ENCODE measurements at regions of chr13 and their contacts with region 1.

Region 1: GRCh38 chr13:97855570-97856303 is 97.7 kb upstream of the IPO5 start:
- DNase-seq: peak; percentile 76
- H3K4me3 Mint-ChIP-seq: no peak overlapping the region
- H3K27ac Mint-ChIP-seq: no peak overlapping the region
- H3K4me1 Mint-ChIP-seq: peaks cover 9% of the 10 kb centered on the region
- H3K27me3 Mint-ChIP-seq: no peaks in the 10 kb centered on the region
- CTCF ChIP-seq: peak; percentile 88

Region 2: GRCh38 chr13:96460609-96461008 is 1395.1 kb before region 1 on chr13:
- CTCF ChIA-PET with region 1: no interaction called
- POLR2A ChIA-PET with region 1: no interaction called
- intact Hi-C with region 1: no loop called
- DNase-seq: peak; percentile 58
- H3K4me3 Mint-ChIP-seq: no peak overlapping the region
- H3K27ac Mint-ChIP-seq: no peak overlapping the region
- H3K4me1 Mint-ChIP-seq: no peaks in the 10 kb centered on the region
- H3K27me3 Mint-ChIP-seq: no peaks in the 10 kb centered on the region
- CTCF ChIP-seq: no peak

Region 3: GRCh38 chr13:96632536-96633320 is 1223.0 kb before region 1 on chr13:
- CTCF ChIA-PET with region 1: no interaction called
- POLR2A ChIA-PET with region 1: no interaction called
- intact Hi-C with region 1: no loop called
- DNase-seq: no peak
- H3K4me3 Mint-ChIP-seq: no peak overlapping the region
- H3K27ac Mint-ChIP-seq: no peak overlapping the region
- H3K4me1 Mint-ChIP-seq: peaks cover 10% of the 10 kb centered on the region
- H3K27me3 Mint-ChIP-seq: no peaks in the 10 kb centered on the region
- CTCF ChIP-seq: no peak

Region 4: DNA sequence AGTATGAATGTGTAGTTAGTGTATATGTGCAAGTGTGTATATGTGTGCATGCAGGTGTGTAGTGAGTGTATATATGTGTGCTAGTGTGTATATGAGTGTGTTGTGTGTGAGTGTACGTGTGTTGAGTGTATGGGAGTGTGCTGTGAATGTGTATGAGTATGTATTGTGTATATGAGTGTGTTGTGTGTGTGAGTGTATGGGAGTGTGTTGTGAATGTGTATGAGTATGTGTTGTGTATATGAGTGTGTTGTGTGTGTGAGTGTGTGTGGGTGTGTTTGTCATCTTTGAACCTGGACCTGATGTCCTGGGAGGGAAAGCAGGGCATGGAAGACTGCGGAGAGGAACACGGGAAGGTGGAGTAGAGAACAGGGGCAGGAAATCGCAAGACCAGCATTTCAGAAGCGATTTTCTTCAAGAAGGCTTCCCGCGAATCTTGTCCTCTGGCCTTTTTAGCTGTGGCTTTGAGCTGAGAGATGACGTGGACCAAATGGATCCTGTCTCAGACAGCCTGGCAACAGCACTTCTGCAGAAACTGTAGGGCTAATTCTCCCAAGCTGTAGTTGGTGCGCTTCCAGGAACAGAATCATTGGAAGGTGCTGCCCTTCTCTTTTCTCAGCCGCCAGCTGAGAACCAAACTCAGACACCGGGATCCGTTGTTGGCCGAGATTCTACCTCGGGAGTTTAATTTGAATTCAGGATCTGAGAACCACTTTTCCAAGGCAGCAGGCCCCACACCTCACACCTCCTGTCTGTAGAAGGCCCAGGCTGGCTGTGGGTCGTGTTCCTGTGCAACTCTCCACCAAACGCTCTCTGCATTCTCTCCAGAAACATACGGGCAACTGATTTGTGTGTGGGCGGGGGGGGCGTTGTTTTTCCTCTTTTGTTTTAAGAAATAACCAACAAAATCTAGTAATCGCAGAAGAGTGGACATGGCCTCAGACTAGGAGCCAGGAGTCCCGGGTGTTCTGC is 516.4 kb before region 1 on chr13:
- CTCF ChIA-PET with region 1: no interaction called
- POLR2A ChIA-PET with region 1: no interaction called
- intact Hi-C with region 1: no loop called
- DNase-seq: no peak
- H3K4me3 Mint-ChIP-seq: no peak overlapping the region
- H3K27ac Mint-ChIP-seq: no peak overlapping the region
- H3K4me1 Mint-ChIP-seq: no peaks in the 10 kb centered on the region
- H3K27me3 Mint-ChIP-seq: no peaks in the 10 kb centered on the region
- CTCF ChIP-seq: no peak

Region 5: GRCh38 chr13:97866346-97866745 is 10.6 kb after region 1 on chr13:
- CTCF ChIA-PET with region 1: interaction called, 27 read pairs
- POLR2A ChIA-PET with region 1: no interaction called
- intact Hi-C with region 1: no loop called
- DNase-seq: peak; percentile 8
- H3K4me3 Mint-ChIP-seq: no peak overlapping the region
- H3K27ac Mint-ChIP-seq: no peak overlapping the region
- H3K4me1 Mint-ChIP-seq: no peaks in the 10 kb centered on the region
- H3K27me3 Mint-ChIP-seq: no peaks in the 10 kb centered on the region
- CTCF ChIP-seq: no peak

Region 6: GRCh38 chr13:97975848-97976609 is 120.3 kb after region 1 on chr13:
- CTCF ChIA-PET with region 1: interaction called, 13 read pairs
- POLR2A ChIA-PET with region 1: interaction called, 3 read pairs
- intact Hi-C with region 1: loop called (anchors 1 kb)
- DNase-seq: peak; percentile 89
- H3K4me3 Mint-ChIP-seq: peak overlapping the region; percentile 91
- H3K27ac Mint-ChIP-seq: peak overlapping the region; percentile 95
- H3K4me1 Mint-ChIP-seq: peaks cover 8% of the 10 kb centered on the region
- H3K27me3 Mint-ChIP-seq: no peaks in the 10 kb centered on the region
- CTCF ChIP-seq: no peak

Region 7: GRCh38 chr13:98089246-98089645 is 233.5 kb after region 1 on chr13:
- CTCF ChIA-PET with region 1: no interaction called
- POLR2A ChIA-PET with region 1: no interaction called
- intact Hi-C with region 1: no loop called
- DNase-seq: no peak
- H3K4me3 Mint-ChIP-seq: no peak overlapping the region
- H3K27ac Mint-ChIP-seq: no peak overlapping the region
- H3K4me1 Mint-ChIP-seq: no peaks in the 10 kb centered on the region
- H3K27me3 Mint-ChIP-seq: no peaks in the 10 kb centered on the region
- CTCF ChIP-seq: no peak

Region 8: DNA sequence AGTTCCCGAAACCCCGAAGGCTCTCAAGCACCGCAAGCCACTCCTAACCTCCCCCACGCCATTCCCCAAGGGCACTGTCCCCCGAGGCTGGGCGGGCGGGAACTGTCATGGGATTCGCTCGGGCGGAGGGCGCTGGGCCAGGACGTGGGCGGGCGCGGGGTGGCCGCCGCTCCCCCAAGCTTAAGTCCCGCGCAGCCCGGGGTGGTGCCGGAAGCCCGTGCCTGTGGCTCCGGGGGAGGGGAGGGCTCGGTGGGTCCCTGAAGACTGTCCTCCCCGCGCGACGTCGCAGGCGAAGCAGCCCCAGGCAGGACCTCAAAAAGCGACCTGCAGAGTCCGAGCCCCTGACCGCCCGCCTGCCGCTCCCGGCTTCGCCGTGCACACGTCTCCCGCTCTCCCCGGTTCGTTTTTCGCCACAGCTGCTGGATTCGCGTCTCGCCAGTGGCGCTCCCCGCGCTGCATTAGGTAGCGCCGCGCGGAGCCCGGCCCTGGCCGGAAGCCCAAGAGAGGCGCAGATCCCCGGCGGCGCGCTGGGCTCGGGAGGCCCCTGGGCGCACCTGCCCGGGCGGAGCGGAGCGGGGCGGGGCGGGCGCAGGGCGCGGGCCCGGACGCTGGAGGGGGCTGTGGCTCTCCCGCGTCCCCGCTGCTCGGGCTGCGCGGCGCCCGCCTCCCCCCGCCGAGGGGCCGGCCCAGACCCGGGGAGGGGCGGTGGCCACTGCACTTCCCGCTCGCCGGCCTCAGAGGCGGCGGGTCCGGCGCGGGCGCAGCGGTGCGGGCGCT is 286.8 kb after region 1 on chr13 and contains the start of gene FARP1:
- CTCF ChIA-PET with region 1: no interaction called
- POLR2A ChIA-PET with region 1: no interaction called
- intact Hi-C with region 1: loop called (anchors 2 kb)
- DNase-seq: peak; percentile 70
- H3K4me3 Mint-ChIP-seq: peak within 1 kb of the TSS; percentile 76
- H3K27ac Mint-ChIP-seq: peak within 1 kb of the TSS; percentile 46
- H3K4me1 Mint-ChIP-seq: peaks cover 16% of the 10 kb centered on the region
- H3K27me3 Mint-ChIP-seq: peaks cover 12% of the 10 kb centered on the region
- CTCF ChIP-seq: peak; percentile 30
- total RNA-seq, gene FARP1: 20.7 and 30.1 TPM in 2 replicates

Region 9: DNA sequence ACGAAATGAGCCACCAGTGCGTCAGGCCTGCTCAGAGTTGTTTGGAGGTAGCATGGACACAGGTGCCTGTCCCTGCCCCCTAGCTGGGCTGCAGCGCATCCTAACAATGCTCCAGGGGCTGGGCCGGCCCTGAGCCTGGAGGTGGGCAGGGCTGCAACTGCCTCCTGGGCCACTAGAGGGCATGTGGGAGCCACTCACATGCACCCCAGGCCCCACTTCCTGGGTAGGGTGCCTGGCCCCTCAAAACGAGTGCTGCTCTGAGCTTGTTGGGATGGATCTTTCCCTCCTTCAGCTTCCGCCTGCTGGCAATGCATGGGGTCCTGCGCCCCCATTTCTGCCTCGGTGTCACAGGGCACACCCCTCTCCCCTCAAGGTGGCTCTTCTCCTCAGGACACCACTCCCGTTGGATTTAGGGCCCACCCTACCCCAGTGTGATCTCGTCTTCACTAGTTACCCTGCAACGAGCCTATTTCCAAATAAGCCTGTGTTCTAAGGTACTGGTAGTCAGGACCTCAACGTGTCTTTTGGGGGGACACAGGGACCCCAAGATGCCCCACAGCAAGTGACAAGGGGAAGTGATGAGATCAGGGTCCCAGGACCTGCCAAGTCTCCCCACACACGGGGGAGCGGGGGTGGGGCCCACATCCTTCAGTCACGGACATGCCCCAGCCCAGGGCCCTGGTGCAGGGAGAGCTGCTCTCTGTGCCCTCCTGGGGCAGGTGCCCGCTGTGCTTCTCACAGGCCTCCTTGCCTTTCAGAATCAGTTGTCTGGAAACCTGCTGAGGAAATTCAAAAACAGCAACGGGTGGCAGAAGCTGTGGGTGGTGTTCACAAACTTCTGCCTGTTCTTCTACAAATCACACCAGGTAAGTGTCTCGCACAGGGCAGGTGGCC is 589.9 kb after region 1 on chr13:
- CTCF ChIA-PET with region 1: interaction called, 6 read pairs
- POLR2A ChIA-PET with region 1: no interaction called
- intact Hi-C with region 1: loop called (anchors 2 kb)
- DNase-seq: peak; percentile 75
- H3K4me3 Mint-ChIP-seq: no peak overlapping the region
- H3K27ac Mint-ChIP-seq: no peak overlapping the region
- H3K4me1 Mint-ChIP-seq: peaks cover 19% of the 10 kb centered on the region
- H3K27me3 Mint-ChIP-seq: no peaks in the 10 kb centered on the region
- CTCF ChIP-seq: peak; percentile 97

Region 10: DNA sequence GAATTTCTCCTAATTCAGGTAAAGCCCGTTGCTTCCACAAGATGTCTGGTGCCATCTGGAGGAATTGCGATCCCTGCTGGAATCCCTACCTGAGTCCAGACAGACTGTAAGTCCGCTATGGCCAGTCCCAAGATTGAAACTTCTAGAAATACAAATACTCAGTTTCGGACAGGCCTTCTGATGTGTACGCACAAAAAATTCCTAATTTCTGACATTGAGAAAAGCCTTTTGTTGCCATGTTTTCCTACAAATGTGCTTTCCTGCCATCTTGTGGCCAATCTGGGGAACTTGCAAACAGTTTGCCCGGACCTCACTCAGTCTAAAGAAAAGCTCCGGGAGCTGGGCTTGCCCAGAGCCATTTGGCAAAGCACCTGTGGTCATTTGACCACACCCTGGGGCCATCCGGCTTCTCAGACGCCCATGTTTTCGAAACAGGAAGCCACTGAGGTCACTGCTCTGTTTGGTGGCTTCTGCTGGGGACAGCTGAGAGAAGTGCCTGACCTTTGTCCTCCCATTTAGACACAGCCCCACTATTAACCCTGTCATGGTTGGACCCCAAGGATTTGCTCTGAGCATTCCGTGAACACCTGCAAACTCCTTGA is 817.3 kb after region 1 on chr13:
- CTCF ChIA-PET with region 1: interaction called, 4 read pairs
- POLR2A ChIA-PET with region 1: no interaction called
- intact Hi-C with region 1: loop called (anchors 1 kb)
- DNase-seq: peak; percentile 73
- H3K4me3 Mint-ChIP-seq: no peak overlapping the region
- H3K27ac Mint-ChIP-seq: no peak overlapping the region
- H3K4me1 Mint-ChIP-seq: no peaks in the 10 kb centered on the region
- H3K27me3 Mint-ChIP-seq: peaks cover 18% of the 10 kb centered on the region
- CTCF ChIP-seq: peak; percentile 89

Measured in MCF 10A (cell line).